PC-3 (cell line): ENCODE measurements at regions of chr3 and their contacts with region 1.

Region 1: DNA sequence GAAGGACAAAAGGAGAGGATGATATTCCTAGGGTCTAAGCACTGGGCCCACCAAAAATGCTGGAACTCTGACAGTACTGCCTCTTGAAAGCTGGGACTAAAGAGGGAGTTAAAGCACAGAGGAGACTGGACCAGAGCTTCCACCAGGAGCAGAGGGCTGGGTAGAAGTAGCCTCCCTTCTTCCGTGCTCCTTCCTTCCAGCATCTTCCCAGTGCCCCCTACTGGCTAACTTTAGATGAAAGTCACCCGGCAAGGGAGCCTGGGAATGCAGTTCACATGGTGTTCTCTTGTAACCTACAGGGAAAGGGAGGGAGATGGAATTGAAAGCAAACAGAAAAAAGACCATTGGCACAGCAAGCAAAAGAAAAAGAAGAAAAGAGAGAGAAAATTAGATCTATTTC is 106.1 kb upstream of the COL8A1 start:
- DNase-seq: peak; percentile 93
- ATAC-seq: peak; percentile 91
- H3K4me3 ChIP-seq: no peak overlapping the region
- H3K27ac ChIP-seq: no peak overlapping the region
- H3K4me1 ChIP-seq: peaks cover 11% of the 10 kb centered on the region
- H3K27me3 ChIP-seq: no peaks in the 10 kb centered on the region
- CTCF ChIP-seq: peak; percentile 95

Region 2: DNA sequence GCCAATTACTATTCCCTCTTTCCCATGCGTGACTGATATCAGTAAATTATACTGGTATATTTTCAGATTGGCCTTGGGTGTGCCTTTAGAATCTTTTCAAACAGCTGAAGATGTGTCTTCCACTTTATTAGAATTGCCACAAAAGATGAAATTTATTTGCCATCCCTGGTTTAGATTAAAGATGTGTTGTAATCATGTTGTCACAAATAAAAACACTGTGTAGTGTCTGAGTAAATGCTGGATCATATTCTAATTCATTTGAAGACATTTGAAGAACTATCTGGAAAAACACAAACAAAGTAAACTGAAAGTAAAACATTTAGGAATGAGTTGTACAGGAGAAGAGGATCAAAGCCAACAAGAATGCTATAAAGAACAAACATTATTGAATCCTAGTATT is 233.6 kb before region 1 on chr3:
- CTCF ChIA-PET with region 1: no interaction called
- POLR2A ChIA-PET with region 1: no interaction called
- intact Hi-C with region 1: no loop called
- DNase-seq: no peak
- ATAC-seq: no peak
- H3K4me3 ChIP-seq: no peak overlapping the region
- H3K27ac ChIP-seq: no peak overlapping the region
- H3K4me1 ChIP-seq: peaks cover 7% of the 10 kb centered on the region; the same call in 1 of the 2 replicates
- H3K27me3 ChIP-seq: no peaks in the 10 kb centered on the region
- CTCF ChIP-seq: no peak

Region 3: DNA sequence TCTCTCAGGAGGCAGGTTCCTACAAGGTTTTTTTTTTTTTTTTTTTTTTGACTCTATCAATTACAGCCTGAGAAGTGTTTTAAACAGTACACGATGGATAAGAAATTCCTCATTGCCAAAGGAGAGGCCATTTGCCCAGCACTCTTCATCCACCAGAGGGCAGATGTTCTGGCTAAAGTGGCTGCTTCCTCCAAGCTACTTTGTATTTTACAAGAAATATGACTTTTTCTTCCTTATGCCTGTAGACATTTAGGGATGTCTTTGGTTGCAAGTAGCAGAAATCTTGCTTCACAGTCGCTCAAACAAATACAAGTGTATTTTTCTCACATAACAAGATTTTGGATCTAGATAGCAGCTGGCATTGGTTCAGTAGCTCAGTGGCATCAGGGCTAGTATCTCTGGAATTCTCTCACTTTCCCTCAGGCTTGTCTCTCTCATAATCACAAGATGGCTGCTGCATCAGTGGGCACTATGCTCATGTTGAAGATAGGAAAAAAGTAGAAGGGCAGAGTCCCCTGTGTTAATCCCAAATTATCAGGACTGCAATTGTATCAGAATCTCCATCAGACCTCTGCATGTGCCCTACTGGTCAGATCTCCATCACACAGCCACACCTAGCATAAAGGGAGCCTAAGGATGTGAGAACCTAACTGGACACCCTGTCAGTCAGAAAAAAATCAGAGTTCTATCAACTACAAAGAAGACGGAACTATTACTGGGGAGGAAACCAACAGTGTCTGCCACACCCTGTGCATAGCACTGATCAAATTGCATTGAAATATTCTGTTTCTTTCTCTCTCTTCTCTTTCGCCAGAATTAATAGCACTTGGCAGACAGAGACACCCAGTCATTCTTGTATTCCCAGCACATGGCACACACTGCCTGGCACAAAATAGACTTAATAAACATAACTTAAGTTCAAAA is 32.7 kb before region 1 on chr3:
- CTCF ChIA-PET with region 1: interaction called, 8 read pairs
- POLR2A ChIA-PET with region 1: no interaction called
- intact Hi-C with region 1: loop called (anchors 1 kb)
- DNase-seq: peak; percentile 77
- ATAC-seq: peak; percentile 81
- H3K4me3 ChIP-seq: no peak overlapping the region
- H3K27ac ChIP-seq: no peak overlapping the region
- H3K4me1 ChIP-seq: peaks cover 18% of the 10 kb centered on the region
- H3K27me3 ChIP-seq: no peaks in the 10 kb centered on the region
- CTCF ChIP-seq: peak; percentile 94

Region 4: GRCh38 chr3:99686955-99687612 is 154.8 kb after region 1 on chr3:
- CTCF ChIA-PET with region 1: no interaction called
- POLR2A ChIA-PET with region 1: no interaction called
- intact Hi-C with region 1: loop called (anchors 5 kb)
- DNase-seq: peak; percentile 82
- ATAC-seq: peak; percentile 82
- H3K4me3 ChIP-seq: no peak overlapping the region
- H3K27ac ChIP-seq: no peak overlapping the region
- H3K4me1 ChIP-seq: no peaks in the 10 kb centered on the region
- H3K27me3 ChIP-seq: no peaks in the 10 kb centered on the region
- CTCF ChIP-seq: peak; percentile 89

Region 5: GRCh38 chr3:100184948-100185570 is 652.8 kb after region 1 on chr3:
- CTCF ChIA-PET with region 1: no interaction called
- POLR2A ChIA-PET with region 1: no interaction called
- intact Hi-C with region 1: no loop called
- DNase-seq: no peak
- ATAC-seq: no peak
- H3K4me3 ChIP-seq: no peak overlapping the region
- H3K27ac ChIP-seq: no peak overlapping the region
- H3K4me1 ChIP-seq: no peaks in the 10 kb centered on the region
- H3K27me3 ChIP-seq: no peaks in the 10 kb centered on the region
- CTCF ChIP-seq: no peak